AG04450 (cell line): ENCODE measurements at regions of chr15 and their contacts with region 1.

Region 1: DNA sequence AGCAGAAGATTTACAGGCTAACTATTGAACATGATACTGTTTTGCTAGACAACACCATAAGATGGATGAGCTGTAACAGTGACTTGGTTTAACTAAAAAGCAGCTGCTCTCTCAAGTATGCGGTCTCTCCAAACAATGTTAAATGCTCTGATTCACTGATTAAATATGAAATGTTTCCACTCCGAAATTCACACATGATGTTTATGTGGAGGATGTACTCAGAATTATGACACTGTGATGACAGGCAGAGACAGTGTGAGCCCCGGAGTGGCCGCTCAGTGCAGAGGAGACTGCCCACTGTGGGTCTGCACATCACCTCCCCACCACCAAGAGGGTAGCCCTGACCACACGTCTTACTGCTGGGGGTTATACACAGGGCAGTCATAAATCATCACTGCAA is 83.9 kb upstream of the MEX3B start:
- DNase-seq: peak; percentile 82
- H3K4me3 ChIP-seq: peak overlapping the region; percentile 18; the same call in 1 of the 2 replicates
- H3K27ac ChIP-seq: peak overlapping the region; percentile 91
- H3K27me3 ChIP-seq: no peaks in the 10 kb centered on the region
- CTCF ChIP-seq: no peak

Region 2: GRCh38 chr15:81752546-81752942 is 377.2 kb before region 1 on chr15:
- CTCF ChIA-PET with region 1: no interaction called
- POLR2A ChIA-PET with region 1: no interaction called
- DNase-seq: no peak
- H3K4me3 ChIP-seq: no peak overlapping the region
- H3K27ac ChIP-seq: no peak overlapping the region
- H3K27me3 ChIP-seq: peaks cover 2% of the 10 kb centered on the region
- CTCF ChIP-seq: no peak

Region 3: DNA sequence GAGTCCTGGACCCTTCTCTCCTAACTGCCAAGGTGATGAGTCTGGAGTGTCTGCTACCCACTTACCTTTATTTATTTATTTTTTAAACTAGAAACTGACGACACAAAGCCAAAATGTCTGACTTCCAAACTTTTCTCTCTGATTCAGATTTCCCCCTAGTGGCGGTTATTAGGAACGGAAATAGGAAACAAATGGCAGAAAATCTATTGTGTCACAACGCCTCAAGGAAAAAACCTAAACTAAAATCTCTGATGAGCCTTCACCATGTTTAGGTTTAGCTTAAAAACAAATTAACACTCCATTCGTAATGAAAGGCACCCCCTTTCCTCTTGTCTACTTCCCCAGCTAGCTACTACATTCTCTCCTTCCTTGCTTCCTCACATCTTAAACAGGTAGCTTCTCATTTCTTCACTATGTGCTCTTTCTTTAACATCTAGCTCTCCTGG is 10.1 kb after region 1 on chr15:
- CTCF ChIA-PET with region 1: interaction called, 24 read pairs
- POLR2A ChIA-PET with region 1: interaction called, 3 read pairs
- DNase-seq: no peak
- H3K4me3 ChIP-seq: no peak overlapping the region
- H3K27ac ChIP-seq: no peak overlapping the region
- H3K27me3 ChIP-seq: no peaks in the 10 kb centered on the region
- CTCF ChIP-seq: peak; percentile 82